ENCODE measurements at regions of chr12 and their contacts with region 1.

Region 1: GRCh38 chr12:54398995-54399793 is 14.7 kb upstream of the ZNF385A start:
- DNase-seq: peak; percentile 58 to 95 (median 90)

Region 2: DNA sequence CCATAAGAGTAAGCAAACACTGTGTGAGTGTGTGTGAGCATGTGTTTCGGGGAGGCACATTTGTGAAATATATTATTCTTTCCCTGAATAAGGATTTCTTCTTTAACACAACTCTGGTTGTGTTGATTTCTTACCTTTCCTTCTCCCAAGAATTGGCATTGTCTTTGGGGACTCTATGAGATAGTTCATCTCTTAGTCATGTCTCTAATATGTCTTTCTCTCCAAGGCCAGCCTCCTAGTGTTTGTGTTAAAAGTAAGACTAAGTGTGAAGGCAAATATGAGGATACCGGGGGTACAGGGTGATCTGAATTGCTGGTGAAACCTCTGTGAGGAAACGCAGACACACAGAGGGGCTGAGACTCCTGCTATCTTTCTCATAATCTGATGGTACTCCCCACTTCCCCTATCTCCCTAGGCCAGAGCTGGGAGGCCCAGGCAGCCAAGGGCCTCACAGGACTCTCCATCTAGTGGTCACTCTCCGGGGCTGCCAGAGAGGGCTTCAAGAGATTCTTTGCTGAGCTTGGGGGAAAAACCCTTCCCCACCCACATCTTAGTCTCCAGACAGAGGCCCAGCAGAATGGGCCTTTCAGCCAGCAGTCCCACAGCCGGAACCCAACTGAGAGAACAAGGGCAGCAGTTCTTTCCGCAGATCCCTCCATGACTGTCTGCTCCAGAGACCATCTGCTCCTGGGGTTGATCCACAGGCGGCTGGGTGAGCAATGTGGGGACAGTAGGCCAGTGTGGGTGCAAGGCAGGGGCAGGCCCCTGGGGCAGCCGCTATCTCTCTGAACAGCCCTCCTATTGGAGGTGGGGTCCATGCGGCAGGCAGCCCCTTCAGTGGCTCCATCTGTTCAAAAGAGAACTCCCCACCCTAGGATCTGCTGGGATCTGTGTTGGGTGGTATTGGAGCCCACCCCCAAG is 450.3 kb before region 1 on chr12:
- intact Hi-C with region 1: no loop called
- DNase-seq: no peak

Region 3: GRCh38 chr12:54439521-54440255 is 40.5 kb after region 1 on chr12:
- intact Hi-C with region 1: loop called (anchors 5 kb)
- DNase-seq: peak in 8 of 42 donors; percentile 12 to 52 (median 44)

Region 4: GRCh38 chr12:54526812-54527630 is 127.8 kb after region 1 on chr12:
- intact Hi-C with region 1: no loop called
- DNase-seq: peak; percentile 48 to 88 (median 79)